Activated CD8-positive, alpha-beta T cell treated with anti-CD3 and anti-CD28 coated beads for 36 hours (primary cell): ENCODE measurements at regions of chr1 and their contacts with region 1.

Region 1: GRCh38 chr1:246591504-246591903 is 25.2 kb downstream of the CNST start:
- DNase-seq: peak; percentile 42
- ATAC-seq: peak; percentile 61
- H3K4me3 Mint-ChIP-seq: no peak overlapping the region
- H3K27ac Mint-ChIP-seq: peak overlapping the region; percentile 44
- H3K4me1 Mint-ChIP-seq: peaks cover 45% of the 10 kb centered on the region
- H3K27me3 Mint-ChIP-seq: no peaks in the 10 kb centered on the region
- CTCF ChIP-seq: no peak

Region 2: GRCh38 chr1:246577720-246578106 is 13.8 kb before region 1 on chr1:
- CTCF ChIA-PET with region 1: interaction called, 3 read pairs
- POLR2A ChIA-PET with region 1: interaction called, 10 read pairs
- intact Hi-C with region 1: no loop called
- DNase-seq: no peak
- ATAC-seq: no peak
- H3K4me3 Mint-ChIP-seq: no peak overlapping the region
- H3K27ac Mint-ChIP-seq: peak overlapping the region; percentile 87
- H3K4me1 Mint-ChIP-seq: peaks cover 62% of the 10 kb centered on the region
- H3K27me3 Mint-ChIP-seq: no peaks in the 10 kb centered on the region
- CTCF ChIP-seq: no peak